H1 (cell line): ENCODE measurements at regions of chr17 and their contacts with region 1.

Region 1: DNA sequence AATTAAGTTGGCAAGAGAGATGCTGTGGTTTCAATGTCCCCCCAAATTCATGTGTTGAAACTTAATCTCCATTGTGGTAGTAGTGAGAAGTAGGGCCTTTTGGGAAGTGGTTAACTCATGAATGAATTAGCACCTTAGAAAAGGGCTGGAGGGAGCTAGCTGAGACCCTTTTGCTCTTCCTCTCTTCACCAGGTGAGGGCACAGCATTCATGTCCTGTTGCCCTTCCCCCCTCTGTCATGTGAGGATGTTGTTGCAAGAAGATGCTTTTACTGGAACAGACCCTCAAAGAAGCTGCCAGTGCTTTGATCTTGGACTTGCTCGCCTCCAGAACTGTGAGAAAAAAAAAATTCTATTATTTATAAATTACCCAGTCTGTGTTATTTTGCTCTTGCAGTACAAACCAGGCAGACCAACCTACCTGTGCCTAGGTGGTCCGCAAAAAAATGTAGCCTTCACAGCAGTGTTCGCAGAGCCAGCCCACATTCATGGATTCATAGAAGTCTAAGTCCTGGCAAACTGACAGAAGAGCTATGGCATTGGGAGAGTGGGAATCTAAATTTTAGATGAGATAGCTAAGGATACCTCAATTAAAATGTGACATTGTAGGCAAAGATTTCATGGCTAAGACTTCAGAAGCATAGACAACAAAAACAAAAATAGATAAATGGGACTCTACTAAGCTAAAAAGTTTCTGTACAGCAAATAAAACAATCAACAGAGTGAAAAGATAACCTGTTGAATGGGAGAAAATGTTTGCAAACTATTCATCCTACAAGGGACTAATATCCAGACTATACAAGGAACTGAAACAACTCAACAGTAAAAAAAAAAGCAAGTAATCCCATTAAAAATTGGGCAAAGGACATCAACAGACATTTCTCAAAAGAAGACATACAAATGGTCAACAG is 32.0 kb upstream of the ABCA5 start:
- DNase-seq: peak in 1 of 2 experiments; percentile 21
- H3K4me3 ChIP-seq: no peak overlapping the region
- H3K27ac ChIP-seq: no peak overlapping the region
- H3K4me1 ChIP-seq: peaks cover 0 to 9% (median 0%) of the 10 kb centered on the region in 4 experiments; a peak in 1 of 7 replicates
- H3K27me3 ChIP-seq: no peaks in the 10 kb centered on the region
- CTCF ChIP-seq: peak; percentile 69 to 79 (median 72)
- EP300 ChIP-seq: no peak
- POLR2A ChIP-seq: no peak
- RAD21 ChIP-seq: peak; percentile 72 to 75

Region 2: GRCh38 chr17:69335058-69335457 is 23.9 kb before region 1 on chr17:
- CTCF ChIA-PET with region 1: interaction called, 11 read pairs
- POLR2A ChIA-PET with region 1: no interaction called
- DNase-seq: no peak
- H3K4me3 ChIP-seq: no peak overlapping the region
- H3K27ac ChIP-seq: no peak overlapping the region
- H3K4me1 ChIP-seq: no peaks in the 10 kb centered on the region
- H3K27me3 ChIP-seq: no peaks in the 10 kb centered on the region
- CTCF ChIP-seq: peak in 2 of 3 experiments; percentile 48 to 55; a peak in 2 of 4 replicates
- EP300 ChIP-seq: no peak
- POLR2A ChIP-seq: no peak
- RAD21 ChIP-seq: peak; percentile 70 to 73

Region 3: GRCh38 chr17:69344939-69345338 is 14.0 kb before region 1 on chr17:
- CTCF ChIA-PET with region 1: interaction called, 25 read pairs
- POLR2A ChIA-PET with region 1: no interaction called
- DNase-seq: no peak
- H3K4me3 ChIP-seq: no peak overlapping the region
- H3K27ac ChIP-seq: no peak overlapping the region
- H3K4me1 ChIP-seq: no peaks in the 10 kb centered on the region; a peak in 3 of 7 replicates
- H3K27me3 ChIP-seq: no peaks in the 10 kb centered on the region
- CTCF ChIP-seq: no peak
- EP300 ChIP-seq: no peak
- POLR2A ChIP-seq: no peak
- RAD21 ChIP-seq: no peak

Region 4: DNA sequence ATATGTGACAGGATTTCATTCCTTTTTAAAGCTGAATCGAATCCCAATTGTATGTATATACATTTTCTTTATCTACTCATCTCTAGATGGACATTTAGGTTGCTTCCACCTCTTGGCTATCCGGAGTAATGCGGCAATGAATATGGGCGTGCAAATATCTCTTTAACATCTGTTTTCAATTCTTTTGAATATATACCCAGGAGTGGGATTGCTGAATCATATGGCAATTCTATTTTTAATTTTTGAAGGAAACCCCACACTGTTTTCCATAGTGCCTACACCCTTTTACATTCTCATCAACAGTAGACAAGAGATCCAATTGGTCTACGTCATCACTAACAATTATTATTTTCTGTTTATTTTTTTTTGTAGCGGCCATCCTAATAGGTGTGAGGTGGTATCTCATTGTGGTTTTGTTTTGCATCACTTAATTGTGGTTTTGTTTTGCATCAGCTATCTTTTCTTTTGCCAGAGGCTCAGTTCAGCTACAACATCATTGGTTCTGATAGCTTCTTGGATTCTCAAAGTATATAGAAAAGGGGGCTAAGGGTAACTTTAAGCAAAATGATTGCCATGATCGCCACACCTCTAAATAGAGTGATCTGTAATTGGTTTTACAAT is 30.0 kb after region 1 on chr17:
- CTCF ChIA-PET with region 1: interaction called, 93 read pairs
- POLR2A ChIA-PET with region 1: no interaction called
- DNase-seq: no peak
- H3K4me3 ChIP-seq: no peak overlapping the region
- H3K27ac ChIP-seq: no peak overlapping the region
- H3K4me1 ChIP-seq: no peaks in the 10 kb centered on the region
- H3K27me3 ChIP-seq: no peaks in the 10 kb centered on the region
- CTCF ChIP-seq: no peak
- EP300 ChIP-seq: no peak
- POLR2A ChIP-seq: no peak
- RAD21 ChIP-seq: no peak